Activated T-helper 2 cell treated with anti-CD3 and anti-CD28 coated beads, Interferon-gamma antibody, Interleukin-2, Interleukin-4, amounts not matched to agents 10 μg/mL and 5 μg/mL and 100 μg/mL, durations not matched to agents 14 hours and 24 hours and 36 hours (primary cell): ENCODE measurements at regions of chr9 and their contacts with region 1.

Region 1: DNA sequence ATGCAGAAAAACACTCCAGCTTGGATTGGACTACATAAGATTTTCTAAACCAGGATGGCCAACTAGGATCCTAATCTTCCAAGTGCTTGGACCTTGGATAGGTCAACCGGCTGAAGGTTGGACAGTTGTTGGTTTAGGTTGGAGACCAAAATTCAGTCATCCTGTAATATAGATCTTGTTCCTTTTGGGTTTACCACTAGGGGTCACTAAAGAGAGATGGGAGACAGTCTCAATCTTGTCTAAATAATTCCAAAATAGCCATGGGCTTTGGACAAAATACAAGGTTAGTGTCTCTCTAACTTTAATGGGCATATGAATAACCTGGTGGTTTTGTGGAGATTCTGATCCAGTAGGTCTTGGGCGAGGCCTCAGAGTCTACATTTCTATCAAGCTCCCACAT is 148.7 kb upstream of the ERCC6L2 start:
- DNase-seq: no peak
- H3K4me3 Mint-ChIP-seq: no peak overlapping the region
- H3K27ac Mint-ChIP-seq: no peak overlapping the region
- H3K4me1 Mint-ChIP-seq: peaks cover 41% of the 10 kb centered on the region
- H3K27me3 Mint-ChIP-seq: peaks cover 10% of the 10 kb centered on the region

Region 2: DNA sequence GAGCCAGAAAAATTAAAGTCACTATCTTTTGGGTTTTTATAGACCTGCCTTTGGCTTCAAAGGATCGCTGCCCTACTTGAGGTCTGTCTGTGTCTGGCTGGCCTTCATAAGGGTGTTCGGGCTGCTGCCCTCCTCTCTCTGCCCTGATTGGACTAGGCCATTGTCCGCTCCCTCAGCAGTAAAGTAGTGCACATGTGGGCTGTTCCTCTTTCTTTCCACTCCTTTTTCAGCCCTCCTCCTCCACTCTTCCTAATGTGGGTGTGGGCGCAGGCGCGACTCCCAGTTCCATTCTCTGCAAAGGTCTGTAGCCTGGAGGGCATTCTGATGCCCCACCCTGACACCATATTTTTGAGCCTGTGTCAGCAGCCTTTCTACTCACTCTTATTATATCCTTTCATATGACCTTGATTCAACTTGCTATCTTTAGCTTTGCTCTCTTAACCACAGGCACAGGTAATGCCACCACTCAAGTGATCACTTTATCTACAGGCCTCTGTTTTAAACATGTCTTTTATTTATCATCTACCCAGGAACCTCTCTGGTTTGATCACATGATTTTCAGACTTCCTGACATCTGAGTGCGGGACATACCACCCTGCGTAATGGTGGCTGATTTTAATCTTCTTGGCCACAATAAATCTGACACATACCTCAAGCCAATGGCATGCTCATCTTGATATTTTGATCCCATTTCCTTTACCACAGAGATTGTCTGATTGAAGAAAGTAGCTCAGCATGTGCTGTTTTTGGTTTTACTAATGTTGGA is 855.8 kb before region 1 on chr9:
- intact Hi-C with region 1: loop called (anchors 10 kb)
- DNase-seq: peak; percentile 44
- H3K4me3 Mint-ChIP-seq: peak overlapping the region; percentile 51
- H3K27ac Mint-ChIP-seq: peak overlapping the region; percentile 76
- H3K4me1 Mint-ChIP-seq: peaks cover 50% of the 10 kb centered on the region
- H3K27me3 Mint-ChIP-seq: peaks cover 46% of the 10 kb centered on the region

Region 3: DNA sequence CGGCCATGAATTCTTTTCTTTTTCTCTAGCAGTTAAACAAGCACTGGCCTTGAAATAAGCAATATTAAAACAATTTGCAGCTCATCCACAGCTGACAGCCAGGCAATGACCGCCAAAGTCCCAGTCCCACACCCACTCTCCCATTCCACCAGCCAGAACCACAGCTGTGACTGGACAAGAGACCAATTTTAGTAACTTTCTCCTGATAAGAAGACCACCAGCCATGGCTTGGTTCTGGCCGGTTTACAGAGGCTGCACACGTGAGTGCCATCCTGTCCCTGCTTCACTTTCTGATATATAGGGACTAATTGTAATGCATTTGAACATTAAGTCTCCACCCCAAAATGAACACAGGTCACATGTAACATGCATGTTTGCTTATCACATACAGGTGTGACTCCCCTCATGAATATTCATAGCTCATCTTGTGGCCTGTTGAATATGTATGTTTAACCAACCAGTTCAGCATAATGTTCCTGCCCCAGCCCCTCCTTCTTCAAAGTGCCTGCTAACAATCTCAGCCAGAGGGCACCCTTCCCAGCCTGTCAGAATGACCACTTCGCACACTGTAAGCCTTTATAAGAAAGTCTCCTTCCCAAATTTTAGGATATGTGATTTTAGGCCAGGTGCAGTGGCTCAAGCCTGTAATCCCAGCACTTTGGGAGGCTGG is 385.3 kb before region 1 on chr9:
- intact Hi-C with region 1: loop called (anchors 1 kb)
- DNase-seq: no peak
- H3K4me3 Mint-ChIP-seq: no peak overlapping the region
- H3K27ac Mint-ChIP-seq: no peak overlapping the region
- H3K4me1 Mint-ChIP-seq: peaks cover 14% of the 10 kb centered on the region
- H3K27me3 Mint-ChIP-seq: peaks cover 27% of the 10 kb centered on the region

Region 4: DNA sequence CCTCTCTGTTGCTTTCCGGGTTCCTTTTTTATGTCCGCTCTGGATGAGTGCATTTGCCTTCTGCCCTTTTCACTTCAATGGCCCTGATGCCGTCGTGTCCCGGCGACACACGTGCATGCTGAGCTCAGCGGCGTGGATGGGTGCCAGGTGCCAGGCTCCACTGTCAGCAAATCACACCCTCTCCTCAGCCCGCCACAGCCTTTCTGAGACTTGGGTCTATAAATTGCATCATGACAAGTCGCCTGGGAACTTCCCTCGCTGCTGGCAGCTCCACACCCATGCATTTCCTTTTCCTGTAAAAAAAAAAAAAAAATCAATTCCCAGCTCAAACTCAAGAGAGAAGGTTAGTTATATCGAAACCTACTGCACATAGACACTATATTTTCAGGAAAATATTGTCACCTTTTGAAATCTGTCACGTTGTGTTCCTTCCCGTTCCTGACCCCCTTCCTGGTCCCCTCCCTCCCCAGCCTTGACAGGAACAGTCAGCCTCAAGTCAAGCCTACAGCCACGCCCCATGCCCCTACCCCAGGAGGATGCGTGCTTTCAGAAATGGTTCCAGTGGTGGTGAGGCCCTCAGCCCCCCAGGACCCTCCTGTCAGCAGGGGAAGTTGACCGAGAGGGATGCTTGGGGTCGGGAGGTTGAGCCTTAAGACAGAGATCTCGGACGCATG is 99.7 kb before region 1 on chr9:
- intact Hi-C with region 1: loop called (anchors 1 kb)
- DNase-seq: no peak
- H3K4me3 Mint-ChIP-seq: no peak overlapping the region
- H3K27ac Mint-ChIP-seq: no peak overlapping the region
- H3K4me1 Mint-ChIP-seq: peaks cover 7% of the 10 kb centered on the region
- H3K27me3 Mint-ChIP-seq: peaks cover 4% of the 10 kb centered on the region

Region 5: DNA sequence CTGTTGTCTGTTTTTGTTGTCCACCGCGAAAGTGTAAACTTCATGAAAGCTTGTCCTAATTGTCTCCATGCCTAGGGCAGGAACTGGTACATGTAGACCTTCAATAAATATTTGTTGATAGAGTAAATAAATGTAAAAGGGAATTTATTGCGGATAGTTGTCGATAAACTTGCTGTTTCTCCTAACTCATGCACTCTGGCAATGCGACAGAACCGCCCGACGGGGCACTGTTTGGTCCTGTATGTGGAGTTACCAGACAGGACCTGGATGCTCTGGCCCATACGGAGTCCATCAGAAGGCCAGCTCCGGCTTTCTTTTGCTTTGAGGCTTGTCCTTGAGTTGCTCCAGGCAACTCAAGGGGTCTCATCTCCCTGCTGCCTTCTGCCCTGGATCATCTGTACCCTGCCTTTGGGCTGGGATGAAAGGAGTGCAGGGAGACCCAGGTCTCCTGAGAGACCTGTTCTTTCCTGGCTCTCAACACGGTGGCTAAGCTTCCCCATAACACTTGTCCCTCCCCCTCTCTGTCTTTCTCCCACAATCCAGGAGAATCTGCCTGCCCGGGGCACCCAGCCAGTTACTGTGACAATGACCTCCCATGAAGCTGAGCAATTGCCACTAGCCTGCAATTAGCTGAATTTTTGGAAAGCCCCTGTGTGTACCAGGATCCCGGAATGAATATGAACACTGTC is 60.5 kb before region 1 on chr9:
- intact Hi-C with region 1: no loop called
- DNase-seq: no peak
- H3K4me3 Mint-ChIP-seq: no peak overlapping the region
- H3K27ac Mint-ChIP-seq: no peak overlapping the region
- H3K4me1 Mint-ChIP-seq: no peaks in the 10 kb centered on the region
- H3K27me3 Mint-ChIP-seq: peaks cover 23% of the 10 kb centered on the region

Region 6: GRCh38 chr9:95875305-95876137 is 148.8 kb after region 1 on chr9 and contains the start of gene ERCC6L2:
- intact Hi-C with region 1: loop called (anchors 1 kb)
- DNase-seq: peak; percentile 91
- H3K4me3 Mint-ChIP-seq: no peak within 1 kb of the TSS
- H3K27ac Mint-ChIP-seq: no peak within 1 kb of the TSS
- H3K4me1 Mint-ChIP-seq: peaks cover 30% of the 10 kb centered on the region
- H3K27me3 Mint-ChIP-seq: no peaks in the 10 kb centered on the region
- total RNA-seq, gene ERCC6L2: 28.2 and 33.0 TPM in 2 replicates

Region 7: DNA sequence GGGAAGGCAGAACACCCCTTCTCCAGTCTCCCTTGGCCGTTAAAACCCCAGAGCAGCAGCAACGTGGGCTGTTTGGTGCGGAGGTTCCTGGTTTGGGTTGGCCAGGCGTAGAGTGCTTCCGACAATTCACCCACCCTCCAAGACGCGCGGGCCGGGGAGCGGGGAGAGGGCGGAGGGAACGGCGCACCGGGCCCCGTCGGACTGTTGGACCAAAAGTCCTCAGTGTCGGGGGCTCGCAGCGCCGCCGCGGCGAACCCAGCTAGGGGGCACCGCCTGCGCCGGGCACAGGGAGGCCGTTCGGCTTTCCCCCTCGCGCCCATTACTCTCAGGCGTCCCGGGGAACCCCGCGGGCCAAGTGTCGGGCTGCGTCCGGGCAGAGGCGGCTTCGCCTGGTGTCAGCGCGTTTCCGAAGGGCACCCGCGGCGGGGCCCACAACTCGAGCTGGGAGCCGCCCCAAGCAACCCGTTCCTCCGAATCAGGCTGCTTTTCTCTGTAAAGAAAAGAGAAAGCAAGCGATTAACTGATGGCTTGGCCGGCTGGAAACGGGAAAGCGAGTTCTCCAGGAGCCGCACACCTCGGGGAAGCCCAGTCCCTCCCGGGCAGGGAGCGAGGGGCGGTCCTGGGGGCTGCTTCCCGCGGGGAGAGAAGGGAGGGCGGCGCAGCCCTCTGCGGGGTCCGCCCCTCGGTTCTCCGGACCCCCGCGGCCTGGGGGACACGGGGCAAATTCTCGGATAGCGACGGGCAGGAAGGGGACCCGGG is 294.2 kb after region 1 on chr9:
- intact Hi-C with region 1: loop called (anchors 1 kb)
- DNase-seq: peak; percentile 54
- H3K4me3 Mint-ChIP-seq: peak overlapping the region; percentile 79
- H3K27ac Mint-ChIP-seq: peak overlapping the region; percentile 91
- H3K4me1 Mint-ChIP-seq: peaks cover 75% of the 10 kb centered on the region
- H3K27me3 Mint-ChIP-seq: no peaks in the 10 kb centered on the region

Region 8: DNA sequence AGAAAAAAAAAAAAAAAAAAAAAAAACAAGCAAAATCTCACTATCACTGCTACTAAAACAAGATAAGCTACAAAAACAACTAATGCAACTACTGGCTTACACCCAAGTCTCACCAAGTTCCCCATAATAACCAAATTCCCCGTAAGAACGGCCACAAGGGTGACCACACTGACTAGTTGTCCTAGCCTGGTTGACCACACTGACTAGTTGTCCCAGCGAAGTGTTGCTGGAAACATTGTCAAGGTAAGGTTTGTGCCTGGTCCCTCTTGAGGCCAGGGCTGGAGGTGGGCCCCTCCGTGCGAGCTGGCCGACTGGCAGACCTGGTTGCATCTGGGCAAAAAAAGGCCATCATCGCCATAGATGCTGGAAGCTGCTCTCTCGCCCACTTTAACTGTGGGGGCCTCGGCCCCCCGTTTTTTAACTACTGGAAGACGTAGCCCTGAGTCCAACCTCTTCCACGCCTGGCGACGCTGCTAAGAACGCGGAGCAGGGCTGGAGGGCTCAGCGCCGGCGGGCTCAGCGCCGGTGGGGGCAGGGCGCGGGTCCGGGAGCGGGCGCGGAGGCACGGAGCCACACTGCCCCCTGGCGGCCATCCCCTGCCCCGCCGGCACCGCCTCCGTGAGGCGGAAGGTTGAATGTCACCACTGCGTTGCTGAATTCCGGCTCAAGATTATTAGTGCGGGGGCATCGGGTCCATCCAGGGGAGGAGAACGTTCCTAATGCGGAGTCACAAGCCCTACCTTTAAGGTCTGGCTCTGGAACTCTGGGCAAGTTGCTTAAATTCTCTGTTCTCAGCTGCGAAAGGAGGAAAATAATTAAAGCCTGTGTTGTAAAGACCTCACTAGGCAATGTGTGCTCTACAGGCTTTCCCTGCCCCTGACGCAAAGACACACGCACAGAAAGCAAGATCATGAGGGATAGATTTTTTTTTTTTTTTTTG is 491.3 kb after region 1 on chr9:
- intact Hi-C with region 1: loop called (anchors 2 kb)
- DNase-seq: peak; percentile 64
- H3K4me3 Mint-ChIP-seq: peak overlapping the region; percentile 67
- H3K27ac Mint-ChIP-seq: no peak overlapping the region
- H3K4me1 Mint-ChIP-seq: peaks cover 13% of the 10 kb centered on the region
- H3K27me3 Mint-ChIP-seq: peaks cover 60% of the 10 kb centered on the region